ENCODE measurements at regions of chr6 and their contacts with region 1.

Region 1: DNA sequence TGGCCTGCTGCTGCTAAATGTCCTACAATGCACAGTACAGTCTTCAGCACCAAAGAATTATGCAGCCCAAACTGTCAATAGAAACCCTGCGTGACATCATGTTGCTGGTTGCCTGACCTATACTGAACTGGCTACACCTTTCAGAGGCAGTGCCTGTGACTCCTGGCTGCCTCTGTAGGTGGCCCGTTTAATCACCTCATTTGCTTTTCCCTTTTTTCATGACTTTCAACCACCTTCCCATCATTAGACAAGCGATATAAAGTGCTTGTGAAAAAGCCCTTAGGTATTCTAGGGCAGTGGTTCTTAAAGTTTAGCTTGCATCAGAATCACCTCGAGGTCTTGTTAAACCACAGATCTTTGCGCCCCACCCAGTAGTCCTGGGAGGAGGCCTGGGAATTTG is 33.0 kb upstream of the RIPOR2 start:
- DNase-seq: peak in 2 of 9 experiments; percentile 30 to 52
- ATAC-seq: peak; percentile 70
- H3K4me3 ChIP-seq: no peak overlapping the region
- H3K4me3 Mint-ChIP-seq: no peak overlapping the region
- H3K27ac ChIP-seq: peak overlapping the region in 1 of 2 experiments; percentile 62
- H3K27ac Mint-ChIP-seq: peak overlapping the region; percentile 41
- H3K4me1 ChIP-seq: peaks cover 50% of the 10 kb centered on the region
- H3K4me1 Mint-ChIP-seq: peaks cover 84% of the 10 kb centered on the region
- H3K27me3 ChIP-seq: no peaks in the 10 kb centered on the region
- H3K27me3 Mint-ChIP-seq: no peaks in the 10 kb centered on the region
- CTCF ChIP-seq: no peak

Region 2: GRCh38 chr6:24666097-24666640 is 302.6 kb before region 1 on chr6:
- CTCF ChIA-PET with region 1: no interaction called
- POLR2A ChIA-PET with region 1: no interaction called
- intact Hi-C with region 1: no loop called
- DNase-seq: peak in 4 of 9 experiments; percentile 34 to 56 (median 54)
- ATAC-seq: peak; percentile 30
- H3K4me3 ChIP-seq: peak overlapping the region; percentile 89 to 94
- H3K4me3 Mint-ChIP-seq: peak overlapping the region; percentile 100
- H3K27ac ChIP-seq: peak overlapping the region; percentile 80 to 89
- H3K27ac Mint-ChIP-seq: peak overlapping the region; percentile 98
- H3K4me1 ChIP-seq: peaks cover 45% of the 10 kb centered on the region
- H3K4me1 Mint-ChIP-seq: peaks cover 66% of the 10 kb centered on the region
- H3K27me3 ChIP-seq: no peaks in the 10 kb centered on the region
- H3K27me3 Mint-ChIP-seq: no peaks in the 10 kb centered on the region
- CTCF ChIP-seq: no peak

Region 3: DNA sequence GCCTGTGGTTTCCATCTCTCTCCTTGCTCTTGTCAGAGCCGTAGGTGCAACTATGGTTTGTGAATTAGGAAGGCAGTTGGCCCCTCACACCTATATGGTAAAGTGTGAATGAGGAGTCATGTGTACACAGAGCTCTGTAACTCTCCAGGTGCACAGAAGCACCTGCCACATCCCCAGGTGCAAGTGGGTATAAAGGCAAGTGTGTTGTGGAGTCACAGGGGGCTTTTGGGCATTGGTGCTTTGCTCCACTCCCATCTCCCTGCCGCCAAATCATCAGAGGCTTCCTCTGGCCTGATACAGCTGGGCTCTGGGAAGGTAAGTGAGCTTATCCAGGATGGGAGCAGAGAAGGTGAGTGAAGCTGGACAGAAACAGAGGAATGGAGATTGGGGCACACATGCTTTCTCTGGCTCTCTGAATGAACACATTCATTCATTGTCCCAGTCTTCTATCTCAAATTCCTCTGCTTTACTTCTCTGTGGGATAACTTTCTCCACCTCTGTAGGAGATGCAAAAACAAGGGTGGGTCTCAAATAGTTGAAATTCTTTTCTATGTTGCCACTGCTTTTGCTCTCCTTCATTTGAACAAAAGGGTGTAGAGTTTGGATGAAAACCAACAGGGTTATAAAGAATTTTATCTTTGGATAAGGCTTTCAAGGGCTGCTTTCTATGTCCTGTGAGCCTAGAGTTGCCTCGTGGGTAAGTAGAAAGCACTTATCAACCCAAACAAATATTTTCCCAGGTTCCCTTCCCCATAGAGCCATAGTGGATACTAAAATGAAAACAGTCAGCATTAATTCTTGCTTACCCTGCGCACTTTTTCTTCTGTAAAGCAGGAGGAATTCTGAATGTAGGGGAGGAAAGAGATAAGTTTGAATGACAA is 12.0 kb after region 1 on chr6:
- CTCF ChIA-PET with region 1: no interaction called
- POLR2A ChIA-PET with region 1: interaction called, 6 read pairs
- intact Hi-C with region 1: loop called in 1 of 2 experiments (anchors 1 kb)
- DNase-seq: peak in 1 of 9 experiments; percentile 26
- ATAC-seq: peak; percentile 57
- H3K4me3 ChIP-seq: no peak overlapping the region
- H3K4me3 Mint-ChIP-seq: no peak overlapping the region
- H3K27ac ChIP-seq: peak overlapping the region in 1 of 2 experiments; percentile 12
- H3K27ac Mint-ChIP-seq: peak overlapping the region; percentile 25
- H3K4me1 ChIP-seq: peaks cover 42% of the 10 kb centered on the region
- H3K4me1 Mint-ChIP-seq: peaks cover 65% of the 10 kb centered on the region
- H3K27me3 ChIP-seq: no peaks in the 10 kb centered on the region
- H3K27me3 Mint-ChIP-seq: no peaks in the 10 kb centered on the region
- CTCF ChIP-seq: no peak

Region 4: GRCh38 chr6:25147223-25147622 is 178.4 kb after region 1 on chr6:
- CTCF ChIA-PET with region 1: no interaction called
- POLR2A ChIA-PET with region 1: no interaction called
- intact Hi-C with region 1: no loop called
- DNase-seq: no peak
- ATAC-seq: no peak
- H3K4me3 ChIP-seq: no peak overlapping the region
- H3K4me3 Mint-ChIP-seq: no peak overlapping the region
- H3K27ac ChIP-seq: no peak overlapping the region
- H3K27ac Mint-ChIP-seq: no peak overlapping the region
- H3K4me1 ChIP-seq: no peaks in the 10 kb centered on the region
- H3K4me1 Mint-ChIP-seq: no peaks in the 10 kb centered on the region
- H3K27me3 ChIP-seq: no peaks in the 10 kb centered on the region
- H3K27me3 Mint-ChIP-seq: no peaks in the 10 kb centered on the region
- CTCF ChIP-seq: no peak